MCF 10A (cell line): ENCODE measurements at regions of chr16 and their contacts with region 1.

Region 1: GRCh38 chr16:89300311-89300975 is 82.9 kb downstream of the ZNF778 start:
- DNase-seq: peak; percentile 62
- H3K4me3 Mint-ChIP-seq: no peak overlapping the region
- H3K27ac Mint-ChIP-seq: peak overlapping the region; percentile 85
- H3K4me1 Mint-ChIP-seq: peaks cover 14% of the 10 kb centered on the region
- H3K27me3 Mint-ChIP-seq: no peaks in the 10 kb centered on the region
- CTCF ChIP-seq: no peak

Region 2: GRCh38 chr16:89289428-89290395 is 10.7 kb before region 1 on chr16:
- CTCF ChIA-PET with region 1: interaction called, 12 read pairs
- POLR2A ChIA-PET with region 1: interaction called, 4 read pairs
- intact Hi-C with region 1: no loop called
- DNase-seq: peak; percentile 75
- H3K4me3 Mint-ChIP-seq: no peak overlapping the region
- H3K27ac Mint-ChIP-seq: peak overlapping the region; percentile 10
- H3K4me1 Mint-ChIP-seq: no peaks in the 10 kb centered on the region
- H3K27me3 Mint-ChIP-seq: no peaks in the 10 kb centered on the region
- CTCF ChIP-seq: peak; percentile 78